Psoas muscle (tissue), 8 donors: ENCODE measurements at regions of chr19 and their contacts with region 1.

Region 1: DNA sequence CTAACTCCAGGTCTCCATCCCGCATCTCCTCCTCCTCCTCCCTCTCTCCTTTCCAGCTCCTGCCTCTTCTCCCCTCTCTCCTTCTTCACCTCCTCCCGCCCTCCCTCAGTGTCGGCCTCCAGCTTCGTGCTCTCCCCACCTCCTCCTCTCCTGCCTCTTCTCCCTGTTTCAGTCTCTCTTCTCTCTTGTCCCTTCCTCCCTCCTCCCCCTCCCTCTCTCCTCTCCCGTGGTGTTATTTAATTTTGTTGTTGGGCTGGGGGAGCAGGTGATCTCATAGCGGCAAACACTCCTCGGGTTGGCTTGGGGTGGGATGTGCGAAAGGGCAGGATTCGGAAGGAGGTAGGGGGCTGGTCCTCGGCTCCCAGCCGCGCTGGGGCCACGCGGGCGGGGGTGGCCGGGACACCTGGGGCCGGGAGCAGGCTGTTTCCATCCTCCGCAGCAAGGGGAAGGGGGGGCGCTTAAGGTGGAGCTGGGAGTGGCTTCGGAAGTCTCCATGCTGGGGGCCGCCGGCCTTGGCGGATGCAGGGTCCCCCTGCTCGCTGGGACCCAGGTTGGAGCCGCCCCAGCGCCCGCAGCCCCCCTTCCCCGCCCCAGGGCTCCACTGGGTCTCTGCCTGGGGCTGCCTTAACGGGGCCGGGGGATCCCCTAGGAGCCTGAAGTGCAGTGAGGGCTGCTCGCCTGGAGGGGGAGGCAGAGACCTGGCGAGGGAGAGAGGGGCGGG is at the start of gene CA11:
- DNase-seq: peak; percentile 88 to 93
- ATAC-seq: peak; percentile 91 to 93 (median 93)
- H3K4me3 ChIP-seq: peak within 1 kb of the TSS; percentile 71
- H3K27ac ChIP-seq: peak within 1 kb of the TSS; percentile 67
- H3K4me1 ChIP-seq: peaks cover 18% of the 10 kb centered on the region
- H3K27me3 ChIP-seq: no peaks in the 10 kb centered on the region
- CTCF ChIP-seq: peak; percentile 89
- total RNA-seq, gene CA11: 4.1 to 8.8 (median 6.4) TPM

Region 2: GRCh38 chr19:48738557-48739399 is 92.6 kb after region 1 on chr19:
- intact Hi-C with region 1: loop called in 1 of 2 experiments (anchors 5 kb)
- DNase-seq: peak; percentile 94 to 96
- ATAC-seq: peak; percentile 91 to 94 (median 92)
- H3K4me3 ChIP-seq: peak overlapping the region; percentile 68
- H3K27ac ChIP-seq: peak overlapping the region; percentile 78
- H3K4me1 ChIP-seq: peaks cover 5% of the 10 kb centered on the region
- H3K27me3 ChIP-seq: no peaks in the 10 kb centered on the region
- CTCF ChIP-seq: peak; percentile 47

Region 3: DNA sequence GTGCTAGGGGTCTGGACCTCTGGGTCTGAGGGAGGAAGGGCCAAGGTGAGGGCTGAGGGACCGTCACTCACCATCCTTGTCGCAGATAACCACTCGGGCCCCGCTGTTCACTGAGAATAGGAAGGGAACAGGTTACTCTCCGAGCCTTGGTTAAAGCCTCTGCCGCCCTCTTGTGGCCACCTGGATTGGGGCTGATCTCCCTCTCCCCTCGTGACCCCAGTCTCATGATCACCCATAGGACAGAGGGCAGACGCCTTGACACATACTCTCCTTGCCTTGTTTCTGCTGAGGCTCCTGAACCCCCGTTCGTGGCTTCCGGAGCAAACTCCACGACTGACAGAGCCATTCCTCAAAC is 189.6 kb after region 1 on chr19:
- intact Hi-C with region 1: loop called (anchors 5 kb)
- DNase-seq: peak; percentile 95 to 97
- ATAC-seq: peak; percentile 98 to 100 (median 98)
- H3K4me3 ChIP-seq: peak overlapping the region; percentile 44
- H3K27ac ChIP-seq: no peak overlapping the region
- H3K4me1 ChIP-seq: no peaks in the 10 kb centered on the region
- H3K27me3 ChIP-seq: no peaks in the 10 kb centered on the region
- CTCF ChIP-seq: peak; percentile 91

Region 4: DNA sequence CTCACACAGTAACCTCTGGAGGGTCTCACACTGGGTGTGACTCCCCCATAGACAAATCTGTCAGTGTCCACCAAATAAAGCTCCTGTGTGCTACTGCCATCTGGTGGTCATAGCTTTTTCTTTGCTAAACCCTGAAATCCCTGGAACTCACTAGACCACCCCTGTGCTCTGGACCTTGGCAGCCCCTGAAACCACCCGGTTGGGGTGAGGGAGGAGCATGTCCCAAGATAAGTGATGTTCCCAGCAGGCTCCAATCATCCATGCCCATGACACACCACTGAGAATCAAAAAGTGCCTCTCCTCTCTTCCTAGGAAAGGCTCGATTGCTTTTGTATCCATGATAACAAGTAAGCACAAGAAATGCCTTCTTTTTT is 196.6 kb after region 1 on chr19:
- intact Hi-C with region 1: loop called (anchors 5 kb)
- DNase-seq: no peak
- ATAC-seq: peak; percentile 61 to 71 (median 63)
- H3K4me3 ChIP-seq: no peak overlapping the region
- H3K27ac ChIP-seq: no peak overlapping the region
- H3K4me1 ChIP-seq: no peaks in the 10 kb centered on the region
- H3K27me3 ChIP-seq: no peaks in the 10 kb centered on the region
- CTCF ChIP-seq: peak; percentile 81